IMR-90 (cell line): ENCODE measurements at regions of chr3 and their contacts with region 1.

Region 1: DNA sequence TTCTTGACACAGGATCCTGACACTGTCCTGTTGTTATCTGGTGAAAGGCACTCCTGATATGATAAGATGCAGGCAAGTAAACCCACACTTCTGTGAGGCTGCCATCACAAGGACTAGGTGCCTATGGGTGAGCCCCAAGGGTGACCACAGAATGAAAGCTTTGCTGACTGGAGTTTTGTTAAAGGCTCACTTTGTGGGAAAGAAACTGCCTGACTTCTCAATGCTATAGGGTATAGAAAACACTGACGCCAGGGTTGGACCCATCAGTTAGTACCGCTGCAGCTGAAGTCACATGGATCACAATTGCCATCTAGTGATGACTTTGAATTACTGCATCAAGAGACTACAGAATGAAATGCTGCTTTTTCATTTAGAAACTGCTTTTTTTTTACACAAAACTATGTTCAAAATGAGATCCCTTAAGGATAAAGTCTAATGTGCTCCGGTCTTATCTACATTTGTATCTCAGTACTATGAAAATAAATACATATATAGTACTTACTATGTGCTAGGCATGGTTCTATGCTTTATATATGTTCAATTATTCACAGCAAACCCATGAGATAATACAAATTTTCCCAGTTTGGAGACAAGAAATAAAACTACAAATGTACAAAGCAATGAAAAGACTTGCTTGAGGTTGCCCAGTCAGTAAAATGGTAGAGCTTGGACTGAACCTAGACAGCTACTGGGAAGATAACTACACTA is 64.2 kb upstream of the CMSS1 start:
- DNase-seq: peak; percentile 86
- ATAC-seq: peak; percentile 92
- H3K4me3 ChIP-seq: no peak overlapping the region
- H3K27ac ChIP-seq: peak overlapping the region; percentile 30
- H3K4me1 ChIP-seq: peaks cover 13% of the 10 kb centered on the region
- H3K27me3 ChIP-seq: no peaks in the 10 kb centered on the region
- CTCF ChIP-seq: peak; percentile 85
- POLR2A ChIP-seq: 0 out of 2 replicates have a peak, but pooled peaks have one; percentile 28
- RAD21 ChIP-seq: peak; percentile 92

Region 2: DNA sequence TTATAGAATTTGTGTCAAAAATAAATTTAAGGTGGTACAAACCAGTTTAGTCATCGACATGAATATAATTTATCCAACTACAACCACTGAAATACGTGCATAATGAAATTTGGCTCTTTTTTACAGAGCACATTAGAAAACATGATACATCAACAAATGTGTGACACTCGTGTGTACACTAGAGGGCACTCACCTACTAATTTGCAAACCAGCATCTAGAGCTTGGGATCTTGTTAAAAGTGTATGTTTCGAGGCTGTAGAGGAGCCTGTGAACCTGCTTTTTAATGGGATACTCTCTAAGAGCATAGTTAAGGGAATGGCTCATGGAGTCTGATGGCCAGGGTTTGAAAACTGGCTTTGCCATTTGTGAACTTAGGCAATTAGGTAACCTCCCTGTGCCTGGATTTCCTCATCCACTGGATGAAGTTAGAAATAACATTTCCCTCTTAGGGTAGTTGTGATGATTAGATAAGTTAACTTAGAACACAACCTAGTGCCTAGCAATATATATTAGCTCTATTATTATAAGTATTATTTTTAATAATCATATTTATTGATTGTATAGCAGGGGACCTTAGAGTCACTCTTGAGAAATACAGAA is 1151.2 kb before region 1 on chr3:
- CTCF ChIA-PET with region 1: no interaction called
- POLR2A ChIA-PET with region 1: no interaction called
- dilution Hi-C with region 1: no loop called
- in situ Hi-C with region 1: loop called (anchors 25 kb)
- intact Hi-C with region 1: no loop called
- DNase-seq: peak; percentile 76
- ATAC-seq: peak; percentile 95
- H3K4me3 ChIP-seq: no peak overlapping the region
- H3K27ac ChIP-seq: no peak overlapping the region
- H3K4me1 ChIP-seq: peaks cover 2% of the 10 kb centered on the region; the same call in 1 of the 2 replicates
- H3K27me3 ChIP-seq: no peaks in the 10 kb centered on the region
- CTCF ChIP-seq: peak; percentile 84
- POLR2A ChIP-seq: no peak
- RAD21 ChIP-seq: peak; percentile 86

Region 3: GRCh38 chr3:99114565-99115291 is 638.7 kb before region 1 on chr3:
- CTCF ChIA-PET with region 1: interaction called, 6 read pairs
- POLR2A ChIA-PET with region 1: no interaction called
- dilution Hi-C with region 1: no loop called
- in situ Hi-C with region 1: loop called (anchors 5 kb)
- intact Hi-C with region 1: loop called (anchors 1 kb)
- DNase-seq: peak; percentile 69
- ATAC-seq: peak; percentile 95
- H3K4me3 ChIP-seq: no peak overlapping the region
- H3K27ac ChIP-seq: no peak overlapping the region
- H3K4me1 ChIP-seq: peaks cover 4% of the 10 kb centered on the region; the same call in 1 of the 2 replicates
- H3K27me3 ChIP-seq: no peaks in the 10 kb centered on the region
- CTCF ChIP-seq: peak; percentile 93
- POLR2A ChIP-seq: peak; percentile 57; the same call in 1 of the 2 replicates
- RAD21 ChIP-seq: peak; percentile 99

Region 4: GRCh38 chr3:99319961-99320360 is 433.5 kb before region 1 on chr3:
- CTCF ChIA-PET with region 1: no interaction called
- POLR2A ChIA-PET with region 1: no interaction called
- dilution Hi-C with region 1: no loop called
- in situ Hi-C with region 1: no loop called
- intact Hi-C with region 1: loop called (anchors 10 kb)
- DNase-seq: peak; percentile 94
- ATAC-seq: peak; percentile 87
- H3K4me3 ChIP-seq: no peak overlapping the region
- H3K27ac ChIP-seq: no peak overlapping the region
- H3K4me1 ChIP-seq: peaks cover 5% of the 10 kb centered on the region
- H3K27me3 ChIP-seq: peaks cover 2% of the 10 kb centered on the region
- CTCF ChIP-seq: no peak
- POLR2A ChIP-seq: no peak
- RAD21 ChIP-seq: no peak

Region 5: DNA sequence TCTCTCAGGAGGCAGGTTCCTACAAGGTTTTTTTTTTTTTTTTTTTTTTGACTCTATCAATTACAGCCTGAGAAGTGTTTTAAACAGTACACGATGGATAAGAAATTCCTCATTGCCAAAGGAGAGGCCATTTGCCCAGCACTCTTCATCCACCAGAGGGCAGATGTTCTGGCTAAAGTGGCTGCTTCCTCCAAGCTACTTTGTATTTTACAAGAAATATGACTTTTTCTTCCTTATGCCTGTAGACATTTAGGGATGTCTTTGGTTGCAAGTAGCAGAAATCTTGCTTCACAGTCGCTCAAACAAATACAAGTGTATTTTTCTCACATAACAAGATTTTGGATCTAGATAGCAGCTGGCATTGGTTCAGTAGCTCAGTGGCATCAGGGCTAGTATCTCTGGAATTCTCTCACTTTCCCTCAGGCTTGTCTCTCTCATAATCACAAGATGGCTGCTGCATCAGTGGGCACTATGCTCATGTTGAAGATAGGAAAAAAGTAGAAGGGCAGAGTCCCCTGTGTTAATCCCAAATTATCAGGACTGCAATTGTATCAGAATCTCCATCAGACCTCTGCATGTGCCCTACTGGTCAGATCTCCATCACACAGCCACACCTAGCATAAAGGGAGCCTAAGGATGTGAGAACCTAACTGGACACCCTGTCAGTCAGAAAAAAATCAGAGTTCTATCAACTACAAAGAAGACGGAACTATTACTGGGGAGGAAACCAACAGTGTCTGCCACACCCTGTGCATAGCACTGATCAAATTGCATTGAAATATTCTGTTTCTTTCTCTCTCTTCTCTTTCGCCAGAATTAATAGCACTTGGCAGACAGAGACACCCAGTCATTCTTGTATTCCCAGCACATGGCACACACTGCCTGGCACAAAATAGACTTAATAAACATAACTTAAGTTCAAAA is 253.9 kb before region 1 on chr3:
- CTCF ChIA-PET with region 1: no interaction called
- POLR2A ChIA-PET with region 1: no interaction called
- dilution Hi-C with region 1: no loop called
- in situ Hi-C with region 1: loop called (anchors 10 kb)
- intact Hi-C with region 1: loop called (anchors 1 kb)
- DNase-seq: peak; percentile 73
- ATAC-seq: peak; percentile 65
- H3K4me3 ChIP-seq: no peak overlapping the region
- H3K27ac ChIP-seq: no peak overlapping the region
- H3K4me1 ChIP-seq: peaks cover 7% of the 10 kb centered on the region
- H3K27me3 ChIP-seq: no peaks in the 10 kb centered on the region
- CTCF ChIP-seq: peak; percentile 87
- POLR2A ChIP-seq: no peak
- RAD21 ChIP-seq: peak; percentile 79

Region 6: GRCh38 chr3:99579246-99579645 is 174.2 kb before region 1 on chr3:
- CTCF ChIA-PET with region 1: no interaction called
- POLR2A ChIA-PET with region 1: no interaction called
- dilution Hi-C with region 1: no loop called
- in situ Hi-C with region 1: no loop called
- intact Hi-C with region 1: no loop called
- DNase-seq: peak; percentile 87
- ATAC-seq: peak; percentile 94
- H3K4me3 ChIP-seq: no peak overlapping the region
- H3K27ac ChIP-seq: no peak overlapping the region
- H3K4me1 ChIP-seq: peaks cover 6% of the 10 kb centered on the region
- H3K27me3 ChIP-seq: no peaks in the 10 kb centered on the region
- CTCF ChIP-seq: no peak
- POLR2A ChIP-seq: no peak
- RAD21 ChIP-seq: no peak

Region 7: DNA sequence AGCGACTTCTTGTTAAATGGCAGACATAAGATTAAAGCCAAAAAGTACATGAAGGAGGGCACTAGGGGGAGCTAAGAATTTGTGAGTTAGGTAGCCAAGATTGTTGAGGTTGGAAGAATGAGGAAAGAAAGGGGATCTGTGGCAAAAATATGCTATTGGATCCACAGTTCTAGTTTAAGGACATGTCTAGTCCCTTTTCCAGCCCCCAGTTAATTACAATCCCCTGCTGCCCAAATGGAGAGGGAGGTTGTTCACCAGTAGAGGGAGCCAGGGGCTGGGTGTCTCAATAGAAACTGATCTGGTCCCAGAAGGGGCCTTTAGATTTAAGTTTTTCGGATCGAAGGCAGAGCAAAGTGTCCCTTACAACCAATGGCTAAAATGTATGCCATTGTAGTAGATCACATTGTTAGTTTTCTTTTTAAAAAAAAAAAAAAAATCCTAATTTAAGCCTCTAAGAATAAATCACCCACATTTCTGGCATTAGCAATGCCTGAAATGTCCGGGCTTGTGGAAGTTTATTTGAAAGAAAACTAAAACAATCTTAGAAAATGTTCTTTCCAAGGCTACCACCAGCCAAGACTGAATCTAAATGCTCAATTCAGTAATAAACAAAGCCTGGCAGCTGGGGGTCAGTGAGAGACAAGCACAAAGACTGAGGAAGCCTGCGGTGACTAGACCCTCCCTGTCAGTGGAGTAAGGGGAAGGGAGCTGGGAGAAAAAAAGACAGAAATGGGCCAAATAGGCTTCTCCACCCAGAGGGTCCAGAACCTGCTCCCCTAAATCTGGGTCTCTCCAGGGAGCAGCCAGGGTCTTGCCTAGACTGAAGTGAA is 107.9 kb before region 1 on chr3:
- CTCF ChIA-PET with region 1: interaction called, 7 read pairs
- POLR2A ChIA-PET with region 1: no interaction called
- dilution Hi-C with region 1: no loop called
- in situ Hi-C with region 1: no loop called
- intact Hi-C with region 1: loop called (anchors 1 kb)
- DNase-seq: peak; percentile 81
- ATAC-seq: peak; percentile 50
- H3K4me3 ChIP-seq: no peak overlapping the region
- H3K27ac ChIP-seq: peak overlapping the region; percentile 89
- H3K4me1 ChIP-seq: peaks cover 20% of the 10 kb centered on the region
- H3K27me3 ChIP-seq: no peaks in the 10 kb centered on the region
- CTCF ChIP-seq: peak; percentile 66
- POLR2A ChIP-seq: no peak
- RAD21 ChIP-seq: peak; percentile 59

Region 8: DNA sequence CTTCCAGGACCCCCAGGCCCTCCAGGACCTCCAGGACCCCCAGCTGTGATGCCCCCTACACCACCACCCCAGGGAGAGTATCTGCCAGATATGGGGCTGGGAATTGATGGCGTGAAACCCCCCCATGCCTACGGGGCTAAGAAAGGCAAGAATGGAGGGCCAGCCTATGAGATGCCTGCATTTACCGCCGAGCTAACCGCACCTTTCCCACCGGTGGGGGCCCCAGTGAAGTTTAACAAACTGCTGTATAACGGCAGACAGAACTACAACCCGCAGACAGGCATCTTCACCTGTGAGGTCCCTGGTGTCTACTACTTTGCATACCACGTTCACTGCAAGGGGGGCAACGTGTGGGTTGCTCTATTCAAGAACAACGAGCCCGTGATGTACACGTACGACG is 42.2 kb after region 1 on chr3:
- CTCF ChIA-PET with region 1: no interaction called
- POLR2A ChIA-PET with region 1: no interaction called
- dilution Hi-C with region 1: no loop called
- in situ Hi-C with region 1: no loop called
- intact Hi-C with region 1: no loop called
- DNase-seq: no peak
- ATAC-seq: no peak
- H3K4me3 ChIP-seq: no peak overlapping the region
- H3K27ac ChIP-seq: no peak overlapping the region
- H3K4me1 ChIP-seq: no peaks in the 10 kb centered on the region
- H3K27me3 ChIP-seq: no peaks in the 10 kb centered on the region
- CTCF ChIP-seq: no peak
- POLR2A ChIP-seq: no peak
- RAD21 ChIP-seq: no peak